IMR-90 (cell line): ENCODE measurements at regions of chr3 and their contacts with region 1.

Region 1: GRCh38 chr3:75171630-75172230 is 492.4 kb upstream of the FRG2C start:
- DNase-seq: peak; percentile 6
- ATAC-seq: peak; percentile 24; the same call in 1 of the 2 replicates
- H3K4me3 ChIP-seq: no peak overlapping the region
- H3K27ac ChIP-seq: no peak overlapping the region
- H3K4me1 ChIP-seq: no peaks in the 10 kb centered on the region
- H3K27me3 ChIP-seq: no peaks in the 10 kb centered on the region
- CTCF ChIP-seq: peak; percentile 46
- POLR2A ChIP-seq: no peak
- RAD21 ChIP-seq: peak; percentile 44

Region 2: DNA sequence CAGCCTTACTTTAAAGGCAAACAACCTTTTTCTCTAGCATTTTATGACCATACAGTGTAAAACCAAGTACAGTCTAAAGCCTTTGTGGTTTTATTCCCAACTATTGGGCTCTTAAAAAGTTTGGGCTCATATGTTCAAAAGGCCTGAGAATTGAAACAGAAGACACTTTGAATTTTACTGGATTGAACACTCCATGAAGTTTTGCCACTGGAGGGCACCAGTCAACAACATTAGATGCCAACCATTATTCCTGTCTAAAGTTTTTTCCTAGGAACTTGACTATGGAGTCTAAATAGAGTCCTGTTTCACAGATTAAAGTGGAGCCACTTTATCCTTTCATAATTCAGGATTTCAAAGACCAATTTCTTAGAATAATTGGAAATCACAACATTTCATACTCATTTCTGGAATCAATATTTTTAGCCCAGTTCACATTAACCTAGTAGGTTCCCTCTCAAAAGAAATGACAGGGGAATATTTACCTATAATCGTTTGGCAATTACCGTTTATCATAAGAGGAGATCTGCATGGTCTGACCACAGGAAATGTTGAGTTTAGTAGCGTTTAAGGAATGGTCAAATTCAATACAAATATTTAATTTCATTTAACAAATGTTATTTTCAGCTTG is 1302.9 kb before region 1 on chr3:
- CTCF ChIA-PET with region 1: no interaction called
- POLR2A ChIA-PET with region 1: no interaction called
- dilution Hi-C with region 1: no loop called
- in situ Hi-C with region 1: no loop called
- intact Hi-C with region 1: loop called (anchors 1 kb)
- DNase-seq: peak; percentile 38
- ATAC-seq: peak; percentile 80
- H3K4me3 ChIP-seq: no peak overlapping the region
- H3K27ac ChIP-seq: no peak overlapping the region
- H3K4me1 ChIP-seq: no peaks in the 10 kb centered on the region
- H3K27me3 ChIP-seq: 0 out of 2 replicates have a peak, but pooled peaks cover 2% of the 10 kb centered on the region
- CTCF ChIP-seq: peak; percentile 68
- POLR2A ChIP-seq: no peak
- RAD21 ChIP-seq: peak; percentile 66

Region 3: GRCh38 chr3:73874601-73875369 is 1296.9 kb before region 1 on chr3:
- CTCF ChIA-PET with region 1: no interaction called
- POLR2A ChIA-PET with region 1: no interaction called
- dilution Hi-C with region 1: no loop called
- in situ Hi-C with region 1: loop called (anchors 25 kb)
- intact Hi-C with region 1: no loop called
- DNase-seq: no peak
- ATAC-seq: no peak
- H3K4me3 ChIP-seq: no peak overlapping the region
- H3K27ac ChIP-seq: no peak overlapping the region
- H3K4me1 ChIP-seq: no peaks in the 10 kb centered on the region
- H3K27me3 ChIP-seq: peaks cover 1% of the 10 kb centered on the region; the same call in 1 of the 2 replicates
- CTCF ChIP-seq: no peak
- POLR2A ChIP-seq: no peak
- RAD21 ChIP-seq: no peak

Region 4: GRCh38 chr3:74067296-74067695 is 1104.4 kb before region 1 on chr3:
- CTCF ChIA-PET with region 1: no interaction called
- POLR2A ChIA-PET with region 1: no interaction called
- dilution Hi-C with region 1: no loop called
- in situ Hi-C with region 1: no loop called
- intact Hi-C with region 1: loop called (anchors 1 kb)
- DNase-seq: peak; percentile 32
- ATAC-seq: peak; percentile 86
- H3K4me3 ChIP-seq: no peak overlapping the region
- H3K27ac ChIP-seq: no peak overlapping the region
- H3K4me1 ChIP-seq: no peaks in the 10 kb centered on the region
- H3K27me3 ChIP-seq: no peaks in the 10 kb centered on the region
- CTCF ChIP-seq: peak; percentile 55
- POLR2A ChIP-seq: no peak
- RAD21 ChIP-seq: peak; percentile 62

Region 5: DNA sequence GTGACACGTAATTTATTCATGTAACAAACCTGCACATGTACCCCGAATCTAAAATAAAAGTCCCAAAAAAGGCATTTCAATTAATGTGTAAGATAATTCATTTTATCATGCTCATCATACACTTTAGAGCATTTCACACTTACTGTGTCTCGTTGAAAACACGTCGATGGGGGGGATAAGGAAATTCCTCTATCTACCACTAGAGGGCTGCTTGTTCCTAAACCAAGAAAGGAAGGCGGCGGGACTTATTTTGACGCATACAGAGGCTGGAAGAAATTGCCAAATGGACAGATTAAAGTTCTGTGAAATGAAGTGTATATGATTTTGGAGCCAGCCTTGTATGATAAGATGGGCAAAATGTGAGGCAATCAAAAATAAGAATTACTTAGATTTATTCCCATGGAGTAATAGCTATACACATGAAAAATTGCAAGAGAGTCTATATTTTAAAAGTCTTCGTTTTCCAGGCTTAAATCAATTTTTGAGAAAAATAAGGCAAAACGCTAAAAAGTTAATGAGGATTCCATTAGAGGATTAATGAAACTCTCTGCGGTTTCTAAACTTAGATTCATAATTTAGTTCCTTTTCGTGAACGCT is 904.0 kb before region 1 on chr3:
- CTCF ChIA-PET with region 1: no interaction called
- POLR2A ChIA-PET with region 1: no interaction called
- dilution Hi-C with region 1: no loop called
- in situ Hi-C with region 1: no loop called
- intact Hi-C with region 1: loop called (anchors 2 kb)
- DNase-seq: peak; percentile 63
- ATAC-seq: peak; percentile 81
- H3K4me3 ChIP-seq: no peak overlapping the region
- H3K27ac ChIP-seq: no peak overlapping the region
- H3K4me1 ChIP-seq: no peaks in the 10 kb centered on the region; the same call in 1 of the 2 replicates
- H3K27me3 ChIP-seq: no peaks in the 10 kb centered on the region
- CTCF ChIP-seq: peak; percentile 63
- POLR2A ChIP-seq: no peak
- RAD21 ChIP-seq: peak; percentile 60

Region 6: DNA sequence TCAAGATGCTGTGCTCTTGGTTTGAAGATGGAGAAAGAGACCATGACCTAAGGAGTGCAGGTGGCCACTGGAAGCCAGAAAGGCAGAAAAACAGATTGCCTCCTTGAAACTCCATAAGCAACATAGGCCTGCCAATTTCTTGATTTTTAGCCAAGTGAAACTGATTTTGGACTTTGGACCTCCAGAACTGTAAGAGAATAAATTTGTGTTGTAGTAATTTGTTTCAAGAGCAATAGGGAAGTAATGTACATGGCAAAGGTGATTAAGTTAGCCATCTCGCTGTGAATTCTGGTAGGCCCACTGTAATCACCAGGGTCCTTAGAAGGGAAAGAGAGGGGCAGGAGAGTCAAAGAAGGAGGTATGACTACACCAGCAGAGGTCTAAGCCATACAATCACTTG is 796.1 kb before region 1 on chr3:
- CTCF ChIA-PET with region 1: no interaction called
- POLR2A ChIA-PET with region 1: no interaction called
- dilution Hi-C with region 1: no loop called
- in situ Hi-C with region 1: no loop called
- intact Hi-C with region 1: loop called (anchors 5 kb)
- DNase-seq: no peak
- ATAC-seq: no peak
- H3K4me3 ChIP-seq: no peak overlapping the region
- H3K27ac ChIP-seq: no peak overlapping the region
- H3K4me1 ChIP-seq: no peaks in the 10 kb centered on the region
- H3K27me3 ChIP-seq: no peaks in the 10 kb centered on the region
- CTCF ChIP-seq: no peak
- POLR2A ChIP-seq: no peak
- RAD21 ChIP-seq: no peak

Region 7: DNA sequence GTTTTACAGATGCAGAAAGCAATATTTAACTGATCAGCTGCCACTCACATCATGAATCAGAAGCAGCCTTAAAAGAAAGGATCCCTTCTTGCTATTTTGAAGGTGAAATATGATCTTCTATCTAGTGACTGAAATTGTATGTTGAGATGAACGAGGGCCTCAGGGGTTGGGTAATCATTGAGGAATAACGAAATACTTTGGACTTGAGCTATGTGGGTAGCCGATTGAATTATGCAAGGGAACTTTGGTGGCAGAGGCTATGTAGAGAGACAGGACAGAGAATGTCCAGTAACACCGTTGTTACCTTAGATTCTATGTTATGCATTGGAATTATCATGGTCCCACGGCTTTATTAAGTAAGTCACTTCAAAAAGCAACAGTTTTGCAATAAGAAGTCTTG is 312.8 kb before region 1 on chr3:
- CTCF ChIA-PET with region 1: no interaction called
- POLR2A ChIA-PET with region 1: no interaction called
- dilution Hi-C with region 1: no loop called
- in situ Hi-C with region 1: no loop called
- intact Hi-C with region 1: no loop called
- DNase-seq: no peak
- ATAC-seq: no peak
- H3K4me3 ChIP-seq: no peak overlapping the region
- H3K27ac ChIP-seq: no peak overlapping the region
- H3K4me1 ChIP-seq: no peaks in the 10 kb centered on the region
- H3K27me3 ChIP-seq: no peaks in the 10 kb centered on the region
- CTCF ChIP-seq: no peak
- POLR2A ChIP-seq: no peak
- RAD21 ChIP-seq: no peak

Region 8: GRCh38 chr3:75089841-75090240 is 81.9 kb before region 1 on chr3:
- CTCF ChIA-PET with region 1: no interaction called
- POLR2A ChIA-PET with region 1: no interaction called
- dilution Hi-C with region 1: no loop called
- in situ Hi-C with region 1: no loop called
- intact Hi-C with region 1: no loop called
- DNase-seq: no peak
- ATAC-seq: no peak
- H3K4me3 ChIP-seq: no peak overlapping the region
- H3K27ac ChIP-seq: no peak overlapping the region
- H3K4me1 ChIP-seq: no peaks in the 10 kb centered on the region
- H3K27me3 ChIP-seq: no peaks in the 10 kb centered on the region
- CTCF ChIP-seq: no peak
- POLR2A ChIP-seq: no peak
- RAD21 ChIP-seq: no peak

Region 9: GRCh38 chr3:76122007-76122406 is 950.3 kb after region 1 on chr3:
- CTCF ChIA-PET with region 1: no interaction called
- POLR2A ChIA-PET with region 1: no interaction called
- dilution Hi-C with region 1: no loop called
- in situ Hi-C with region 1: no loop called
- intact Hi-C with region 1: no loop called
- DNase-seq: peak; percentile 61
- ATAC-seq: peak; percentile 75
- H3K4me3 ChIP-seq: no peak overlapping the region
- H3K27ac ChIP-seq: no peak overlapping the region
- H3K4me1 ChIP-seq: no peaks in the 10 kb centered on the region; the same call in 1 of the 2 replicates
- H3K27me3 ChIP-seq: no peaks in the 10 kb centered on the region
- CTCF ChIP-seq: no peak
- POLR2A ChIP-seq: no peak
- RAD21 ChIP-seq: no peak